Tibial artery (tissue), 4 donors: ENCODE measurements at regions of chr5 and their contacts with region 1.

Region 1: DNA sequence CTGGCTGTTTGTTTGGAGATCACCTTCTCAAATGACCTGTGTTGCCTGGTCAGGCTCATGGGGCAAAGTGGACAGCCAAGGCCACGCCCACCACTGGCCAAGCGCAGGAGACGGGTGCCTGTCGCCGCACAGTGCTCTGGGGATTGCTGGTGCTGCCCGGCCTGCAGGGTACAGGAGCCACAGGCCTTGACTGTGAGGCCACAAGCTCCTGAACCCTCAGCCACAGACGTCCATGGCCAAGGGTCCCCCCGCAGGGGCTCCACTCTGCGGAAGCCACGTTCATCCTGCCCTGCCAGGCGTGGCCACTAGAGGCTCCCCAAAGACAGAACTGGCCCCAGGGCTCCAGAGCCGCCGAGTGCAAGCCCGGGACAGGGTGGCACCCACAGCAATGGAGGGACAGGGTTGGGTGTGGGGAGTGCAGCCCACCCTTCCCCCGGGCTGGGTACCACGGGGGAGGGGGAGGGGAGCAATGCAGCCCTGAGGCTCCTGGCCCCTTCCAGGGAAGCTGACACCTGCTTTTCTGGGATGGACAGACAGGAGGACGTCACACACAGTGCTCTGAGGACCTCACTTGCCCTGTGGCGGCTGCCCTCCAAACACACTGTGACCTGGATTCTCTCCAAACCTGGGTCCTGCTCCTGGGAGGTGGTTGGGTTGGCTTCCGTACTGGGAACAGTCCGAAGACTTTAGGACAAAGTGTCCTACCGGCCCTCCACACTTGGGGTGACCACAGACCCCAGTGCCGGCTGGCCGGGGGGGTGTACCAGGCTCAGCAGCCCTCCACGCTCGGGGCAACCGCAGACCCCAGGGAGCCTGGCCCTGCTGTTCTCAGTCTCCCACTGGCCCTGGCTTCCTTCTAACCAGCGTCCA is 21.5 kb downstream of the TPPP start:
- DNase-seq: peak; percentile 71 to 83
- H3K4me3 ChIP-seq: no peak overlapping the region
- H3K27ac ChIP-seq: no peak overlapping the region
- H3K4me1 ChIP-seq: peaks cover 0 to 41% (median 34%) of the 10 kb centered on the region in 4 donors
- H3K27me3 ChIP-seq: no peaks in the 10 kb centered on the region
- CTCF ChIP-seq: peak; percentile 84 to 92

Region 2: GRCh38 chr5:902129-902916 is 230.6 kb after region 1 on chr5:
- intact Hi-C with region 1: loop called (anchors 5 kb)
- DNase-seq: no peak
- H3K4me3 ChIP-seq: no peak overlapping the region
- H3K27ac ChIP-seq: no peak overlapping the region
- H3K4me1 ChIP-seq: no peaks in the 10 kb centered on the region
- H3K27me3 ChIP-seq: no peaks in the 10 kb centered on the region
- CTCF ChIP-seq: no peak